Activated naive CD4-positive, alpha-beta T cell treated with anti-CD3 and anti-CD28 coated beads for 36 hours (primary cell): ENCODE measurements at regions of chr14 and their contacts with region 1.

Region 1: DNA sequence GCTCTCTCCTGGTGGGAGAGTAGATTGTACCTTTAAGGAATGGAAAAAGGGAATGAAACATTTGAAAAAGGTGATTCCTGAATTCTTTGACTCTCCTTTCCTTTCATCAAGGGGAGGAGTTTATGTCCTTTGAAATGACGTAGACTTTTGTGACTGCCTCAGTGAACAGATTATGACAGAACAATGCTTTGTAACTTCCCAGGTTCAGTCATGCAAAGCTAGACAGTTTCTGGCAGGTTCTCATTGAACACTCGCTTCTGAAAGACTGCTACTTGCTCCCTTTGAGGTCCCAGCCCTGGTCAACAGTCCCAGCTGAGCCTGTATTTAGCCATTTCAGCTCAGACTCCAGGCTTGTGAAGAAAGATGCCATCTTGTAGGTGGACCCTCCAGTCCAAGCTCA is 1178.9 kb downstream of the BCL11B start:
- DNase-seq: no peak
- H3K4me3 Mint-ChIP-seq: no peak overlapping the region
- H3K27ac Mint-ChIP-seq: no peak overlapping the region
- H3K4me1 Mint-ChIP-seq: peaks cover 11% of the 10 kb centered on the region
- H3K27me3 Mint-ChIP-seq: no peaks in the 10 kb centered on the region

Region 2: GRCh38 chr14:98035396-98035795 is 57.7 kb before region 1 on chr14:
- CTCF ChIA-PET with region 1: no interaction called
- intact Hi-C with region 1: loop called (anchors 5 kb)
- DNase-seq: no peak
- H3K4me3 Mint-ChIP-seq: no peak overlapping the region
- H3K27ac Mint-ChIP-seq: no peak overlapping the region
- H3K4me1 Mint-ChIP-seq: peaks cover 3% of the 10 kb centered on the region
- H3K27me3 Mint-ChIP-seq: no peaks in the 10 kb centered on the region